ENCODE measurements at regions of chr5 and their contacts with region 1.

Region 1: GRCh38 chr5:172110921-172111851 is 76.8 kb downstream of the STK10 start:
- DNase-seq: peak; percentile 76
- H3K4me3 Mint-ChIP-seq: peak overlapping the region; percentile 60
- H3K27ac Mint-ChIP-seq: peak overlapping the region; percentile 91
- H3K4me1 Mint-ChIP-seq: peaks cover 76% of the 10 kb centered on the region
- H3K27me3 Mint-ChIP-seq: no peaks in the 10 kb centered on the region

Region 2: GRCh38 chr5:171961117-171961516 is 150.1 kb before region 1 on chr5:
- intact Hi-C with region 1: loop called (anchors 1 kb)
- DNase-seq: peak; percentile 15
- H3K4me3 Mint-ChIP-seq: no peak overlapping the region
- H3K27ac Mint-ChIP-seq: peak overlapping the region; percentile 65
- H3K4me1 Mint-ChIP-seq: peaks cover 69% of the 10 kb centered on the region
- H3K27me3 Mint-ChIP-seq: no peaks in the 10 kb centered on the region

Region 3: DNA sequence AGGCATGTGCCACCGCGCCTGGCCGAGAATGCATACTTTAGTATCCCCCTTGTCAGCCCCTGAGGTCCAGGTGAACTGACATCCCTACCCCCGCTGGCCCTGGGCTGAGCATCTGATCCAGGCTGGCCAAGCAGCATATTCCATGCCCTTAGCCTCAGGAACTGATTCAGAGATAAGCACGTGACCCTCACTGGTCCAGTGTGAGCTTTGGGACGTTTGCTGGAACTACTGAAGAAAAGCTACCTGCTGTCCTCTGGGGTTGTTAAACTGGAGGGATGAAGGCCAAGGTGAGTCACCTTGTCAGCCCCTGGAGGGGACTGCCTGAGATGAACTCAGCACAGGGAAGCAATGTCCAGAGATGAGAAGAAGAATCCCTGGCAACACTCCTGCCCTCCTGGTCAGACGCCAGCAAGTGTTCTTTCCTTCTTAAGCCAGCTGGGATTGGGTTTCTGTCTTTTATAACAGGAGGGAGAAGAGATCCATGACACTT is 45.6 kb before region 1 on chr5:
- intact Hi-C with region 1: loop called (anchors 2 kb)
- DNase-seq: no peak
- H3K4me3 Mint-ChIP-seq: no peak overlapping the region
- H3K27ac Mint-ChIP-seq: no peak overlapping the region
- H3K4me1 Mint-ChIP-seq: peaks cover 34% of the 10 kb centered on the region
- H3K27me3 Mint-ChIP-seq: no peaks in the 10 kb centered on the region

Region 4: DNA sequence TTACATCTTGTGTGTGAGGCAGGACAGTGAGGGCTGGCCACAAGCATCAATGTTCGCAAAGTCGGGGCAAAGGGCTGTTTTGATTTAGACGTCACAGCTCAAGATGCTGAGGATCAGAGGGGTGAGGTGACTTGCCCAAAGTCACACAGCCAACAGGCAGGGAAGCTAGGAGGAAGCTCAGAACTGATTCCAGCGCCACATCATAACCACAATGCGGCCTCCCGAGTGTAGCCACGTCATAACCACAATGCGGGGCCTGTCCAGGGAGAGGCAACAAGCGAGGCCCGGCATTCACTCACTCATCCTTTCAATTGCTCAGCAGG is 62.6 kb after region 1 on chr5:
- intact Hi-C with region 1: loop called (anchors 1 kb)
- DNase-seq: peak; percentile 70
- H3K4me3 Mint-ChIP-seq: peak overlapping the region; percentile 84
- H3K27ac Mint-ChIP-seq: peak overlapping the region; percentile 79
- H3K4me1 Mint-ChIP-seq: peaks cover 82% of the 10 kb centered on the region
- H3K27me3 Mint-ChIP-seq: no peaks in the 10 kb centered on the region

Region 5: DNA sequence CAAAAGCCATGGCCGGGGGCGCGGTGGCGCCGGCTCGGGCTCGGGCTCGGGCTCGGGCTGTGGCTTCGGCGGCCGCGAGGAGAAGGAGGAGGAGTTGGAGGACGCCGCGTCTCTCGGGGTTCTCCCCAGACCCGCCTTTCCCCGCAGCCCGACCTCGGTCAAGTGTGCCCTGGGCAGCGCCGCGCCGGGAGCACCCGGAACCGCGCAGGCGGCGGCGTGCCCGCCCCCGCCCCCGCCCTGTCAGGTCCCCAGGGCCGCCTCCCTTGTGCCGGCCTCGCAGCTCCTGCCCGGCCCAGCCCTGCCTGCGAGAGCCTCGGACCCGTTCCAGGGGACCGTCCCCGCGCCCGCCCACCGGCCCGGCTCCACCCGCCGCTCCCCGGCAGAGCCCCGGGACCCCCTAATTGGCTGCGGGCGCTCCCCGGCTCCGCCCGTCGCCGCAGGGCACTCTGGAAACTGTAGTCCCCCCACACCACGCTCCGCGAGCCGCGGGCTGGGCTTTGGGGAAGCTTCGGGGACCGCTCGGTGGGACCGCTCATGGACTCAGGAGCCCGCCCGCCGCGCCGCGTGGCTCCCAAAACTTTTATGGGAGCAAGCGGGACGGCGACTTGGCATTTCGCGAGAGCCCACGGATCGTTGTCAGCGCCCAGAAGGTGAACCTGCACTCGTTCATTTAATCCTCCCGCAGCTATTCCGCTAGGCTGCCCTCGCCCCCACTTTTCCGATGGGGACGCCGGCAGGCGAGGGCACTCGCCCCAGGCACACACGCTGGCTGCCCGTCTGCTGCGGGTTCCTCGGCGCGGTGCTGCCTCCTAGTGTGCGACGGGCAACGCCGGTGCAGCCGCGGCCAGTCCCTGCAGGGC is 77.1 kb after region 1 on chr5 and contains the start of gene STK10:
- intact Hi-C with region 1: loop called (anchors 1 kb)
- DNase-seq: peak; percentile 88
- H3K4me3 Mint-ChIP-seq: peak within 1 kb of the TSS; percentile 93
- H3K27ac Mint-ChIP-seq: peak within 1 kb of the TSS; percentile 94
- H3K4me1 Mint-ChIP-seq: peaks cover 25% of the 10 kb centered on the region
- H3K27me3 Mint-ChIP-seq: peaks cover 12% of the 10 kb centered on the region
- total RNA-seq, gene STK10: 102 and 105 TPM in 2 replicates

Region 6: GRCh38 chr5:172274921-172275753 is 164.0 kb after region 1 on chr5:
- intact Hi-C with region 1: loop called (anchors 1 kb)
- DNase-seq: peak; percentile 10
- H3K4me3 Mint-ChIP-seq: no peak overlapping the region
- H3K27ac Mint-ChIP-seq: peak overlapping the region; percentile 14
- H3K4me1 Mint-ChIP-seq: peaks cover 23% of the 10 kb centered on the region
- H3K27me3 Mint-ChIP-seq: peaks cover 3% of the 10 kb centered on the region